ENCODE measurements at regions of chr1 and their contacts with region 1.

Region 1: GRCh38 chr1:224434691-224435317 is at the start of gene WDR26:
- DNase-seq: peak; percentile 81
- H3K4me3 ChIP-seq: peak within 1 kb of the TSS; percentile 24 to 100 (median 88)
- H3K27ac ChIP-seq: peak within 1 kb of the TSS; percentile 69
- H3K4me1 ChIP-seq: peaks cover 36% of the 10 kb centered on the region
- H3K27me3 ChIP-seq: no peaks in the 10 kb centered on the region
- CTCF ChIP-seq: peak in 1 of 2 donors; percentile 3
- POLR2A ChIP-seq: peak; percentile 88
- total RNA-seq, gene WDR26: 90.1 and 92.4 TPM in 2 replicates

Region 2: DNA sequence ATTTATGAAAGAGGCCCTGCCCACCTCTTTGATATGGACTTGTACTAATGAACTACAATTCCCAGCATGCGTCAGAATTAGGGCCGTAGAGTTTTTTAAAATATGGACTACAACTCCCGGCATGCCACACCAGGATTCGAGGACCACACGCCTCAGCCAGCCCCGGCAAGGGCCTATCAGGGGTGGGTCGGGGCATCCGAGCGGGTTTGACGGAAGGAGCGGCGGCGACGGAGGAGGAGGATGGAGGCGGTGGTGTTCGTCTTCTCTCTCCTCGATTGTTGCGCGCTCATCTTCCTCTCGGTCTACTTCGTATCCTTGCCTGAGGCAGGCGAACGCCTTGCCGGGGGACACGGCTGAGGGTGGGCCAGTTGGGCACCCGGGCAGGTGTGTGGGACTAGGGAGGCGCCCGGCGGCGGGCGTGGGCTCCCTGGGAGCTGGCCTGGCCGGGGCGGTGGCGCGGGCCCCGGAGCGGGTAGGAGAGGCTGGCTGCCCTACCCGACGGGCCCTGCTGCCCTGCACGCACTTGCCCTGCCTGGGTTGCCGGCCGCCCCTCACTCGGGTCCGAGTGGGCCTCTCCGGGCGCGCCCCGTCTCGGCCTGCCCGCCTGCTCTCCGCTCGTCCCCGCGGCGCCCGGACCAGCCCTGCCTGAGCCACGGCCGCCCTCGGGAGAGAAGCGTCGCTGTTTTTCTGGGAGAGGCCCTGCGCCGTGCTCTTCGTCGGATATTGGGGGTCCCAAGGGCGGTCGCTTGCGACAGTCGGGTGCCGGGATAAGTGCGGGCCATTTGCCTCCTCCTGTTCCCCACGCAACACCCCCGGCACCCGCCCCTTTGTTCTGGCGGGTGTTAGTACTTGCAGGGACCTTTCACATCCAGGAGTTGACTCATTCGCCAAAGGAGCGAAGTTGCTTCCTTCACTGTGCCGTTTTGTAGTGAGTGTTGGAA is 77.8 kb before region 1 on chr1 and contains the start of gene CNIH4:
- CTCF ChIA-PET with region 1: no interaction called
- POLR2A ChIA-PET with region 1: no interaction called
- dilution Hi-C with region 1: no loop called
- intact Hi-C with region 1: loop called (anchors 5 kb)
- DNase-seq: peak; percentile 95
- H3K4me3 ChIP-seq: peak within 1 kb of the TSS; percentile 67 to 71 (median 69)
- H3K27ac ChIP-seq: peak within 1 kb of the TSS; percentile 42
- H3K4me1 ChIP-seq: peaks cover 10% of the 10 kb centered on the region
- H3K27me3 ChIP-seq: no peaks in the 10 kb centered on the region
- CTCF ChIP-seq: no peak
- POLR2A ChIP-seq: peak; percentile 92
- total RNA-seq, gene CNIH4: 74.9 and 84.8 TPM in 2 replicates

Region 3: GRCh38 chr1:224377676-224378006 is 57.2 kb before region 1 on chr1:
- CTCF ChIA-PET with region 1: no interaction called
- POLR2A ChIA-PET with region 1: no interaction called
- dilution Hi-C with region 1: no loop called
- intact Hi-C with region 1: no loop called
- DNase-seq: no peak
- H3K4me3 ChIP-seq: no peak overlapping the region
- H3K27ac ChIP-seq: no peak overlapping the region
- H3K4me1 ChIP-seq: no peaks in the 10 kb centered on the region
- H3K27me3 ChIP-seq: no peaks in the 10 kb centered on the region
- CTCF ChIP-seq: no peak
- POLR2A ChIP-seq: no peak

Region 4: GRCh38 chr1:224497714-224498573 is 63.1 kb after region 1 on chr1:
- CTCF ChIA-PET with region 1: interaction called, 6 read pairs
- POLR2A ChIA-PET with region 1: interaction called, 4 read pairs
- dilution Hi-C with region 1: no loop called
- intact Hi-C with region 1: loop called (anchors 1 kb)
- DNase-seq: peak; percentile 89
- H3K4me3 ChIP-seq: peak overlapping the region in 1 of 3 experiments; percentile 20
- H3K27ac ChIP-seq: peak overlapping the region; percentile 94
- H3K4me1 ChIP-seq: peaks cover 30% of the 10 kb centered on the region
- H3K27me3 ChIP-seq: no peaks in the 10 kb centered on the region
- CTCF ChIP-seq: no peak
- POLR2A ChIP-seq: no peak

Region 5: DNA sequence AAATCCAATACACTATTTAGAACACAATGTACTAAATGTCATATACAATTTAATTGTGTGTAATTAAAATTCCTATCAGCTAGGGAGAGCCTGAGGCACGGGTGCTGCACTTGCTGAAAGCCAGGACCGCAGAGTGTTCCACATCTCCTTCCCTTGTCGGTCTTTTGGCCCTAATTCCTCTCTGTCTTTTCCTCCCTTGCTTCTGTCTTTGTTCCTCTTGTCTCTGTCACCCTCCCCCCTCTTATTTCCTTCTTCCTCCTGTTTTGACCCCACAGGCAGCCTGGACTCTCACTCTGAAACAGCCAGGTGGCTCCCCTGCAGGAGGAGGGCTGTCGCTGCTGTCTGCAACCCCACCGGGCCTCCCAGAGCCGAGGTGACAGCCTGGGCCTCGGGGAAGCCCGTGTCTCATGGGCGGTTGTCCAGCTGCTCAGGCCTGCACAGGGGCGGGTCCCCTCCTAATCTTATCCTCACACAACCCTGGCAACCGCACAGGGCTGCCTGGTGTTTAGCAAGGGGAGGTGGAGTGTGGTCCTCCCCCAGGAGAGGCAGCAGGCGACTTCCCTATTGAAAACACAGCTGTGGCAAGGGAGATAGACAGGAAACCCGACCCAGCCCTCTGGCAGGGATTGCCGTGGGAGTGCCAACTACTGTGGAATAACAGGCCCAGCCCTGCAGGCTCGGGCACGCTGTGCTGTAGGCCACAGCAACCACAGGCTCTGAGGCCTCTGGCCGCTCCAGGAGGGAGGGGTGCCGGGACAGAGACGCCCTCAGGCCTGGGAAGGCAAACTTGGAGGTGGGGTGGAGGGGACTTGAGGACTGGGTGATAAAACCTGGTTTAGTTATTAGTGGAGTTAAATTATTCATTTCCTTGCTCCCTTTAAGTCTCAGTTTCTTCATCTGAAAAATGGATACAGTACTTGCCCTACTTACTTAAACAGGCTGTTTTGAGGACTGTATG is 68.6 kb after region 1 on chr1:
- CTCF ChIA-PET with region 1: interaction called, 6 read pairs
- POLR2A ChIA-PET with region 1: interaction called, 4 read pairs
- dilution Hi-C with region 1: no loop called
- intact Hi-C with region 1: loop called (anchors 1 kb)
- DNase-seq: peak; percentile 93
- H3K4me3 ChIP-seq: no peak overlapping the region
- H3K27ac ChIP-seq: peak overlapping the region; percentile 23
- H3K4me1 ChIP-seq: peaks cover 28% of the 10 kb centered on the region
- H3K27me3 ChIP-seq: no peaks in the 10 kb centered on the region
- CTCF ChIP-seq: peak in 1 of 2 donors; percentile 27
- POLR2A ChIP-seq: no peak

Region 6: DNA sequence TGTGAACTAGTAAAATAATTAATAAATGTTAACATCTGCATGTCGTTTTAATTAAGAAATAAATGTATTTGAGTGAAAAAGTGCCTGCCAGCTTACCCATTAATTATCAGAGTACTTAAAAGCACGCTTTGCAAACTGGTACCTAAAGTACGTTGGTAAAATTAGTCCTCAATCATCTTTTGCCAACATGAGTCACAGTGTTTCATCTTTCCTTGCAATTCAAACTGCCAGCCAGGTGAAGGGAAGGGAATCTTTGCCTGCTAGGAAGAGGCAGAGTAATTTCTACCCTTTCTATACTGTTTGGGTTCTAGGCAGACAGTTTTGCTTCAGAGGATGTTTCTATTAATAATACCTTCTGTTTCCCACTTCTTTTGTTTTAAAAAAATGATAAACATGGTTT is 124.1 kb after region 1 on chr1:
- CTCF ChIA-PET with region 1: no interaction called
- POLR2A ChIA-PET with region 1: no interaction called
- dilution Hi-C with region 1: no loop called
- intact Hi-C with region 1: no loop called
- DNase-seq: no peak
- H3K4me3 ChIP-seq: no peak overlapping the region
- H3K27ac ChIP-seq: no peak overlapping the region
- H3K4me1 ChIP-seq: peaks cover 2% of the 10 kb centered on the region
- H3K27me3 ChIP-seq: no peaks in the 10 kb centered on the region
- CTCF ChIP-seq: no peak
- POLR2A ChIP-seq: no peak

Region 7: DNA sequence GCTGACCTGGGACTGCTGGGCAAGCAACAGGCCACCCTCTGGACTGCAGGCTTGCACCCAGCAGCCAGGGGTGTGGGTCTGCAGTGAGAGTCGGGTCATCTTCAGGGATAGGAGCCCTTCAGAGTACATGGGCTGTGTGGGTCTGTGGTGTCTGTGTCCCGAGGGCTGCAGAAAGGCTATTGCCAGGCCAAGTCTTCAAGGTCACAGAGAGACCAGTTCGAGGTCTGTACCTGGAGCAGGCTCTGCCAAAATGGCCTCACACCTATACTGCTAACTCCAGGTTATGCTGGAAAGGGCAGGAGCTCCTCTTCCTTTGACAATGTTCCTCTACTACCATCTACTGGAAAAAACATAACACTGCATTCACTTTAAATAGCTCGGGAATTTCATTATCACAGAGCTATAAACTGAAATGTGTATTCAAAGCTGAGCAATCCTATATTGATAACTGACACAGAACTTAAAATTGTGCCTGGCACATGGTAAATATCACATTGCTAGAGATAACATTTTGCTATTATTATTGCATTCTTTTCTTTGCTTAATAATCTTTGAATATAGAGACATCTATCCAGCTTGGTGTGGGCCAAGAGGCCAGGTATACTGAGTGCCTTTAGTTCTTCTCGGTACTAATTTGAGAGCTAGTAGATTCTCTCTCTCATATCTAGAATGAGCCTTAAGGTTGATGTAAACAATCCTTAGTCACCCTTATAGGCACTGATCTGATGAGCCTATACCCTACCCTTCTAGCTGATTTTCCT is 487.8 kb after region 1 on chr1:
- CTCF ChIA-PET with region 1: interaction called, 12 read pairs
- POLR2A ChIA-PET with region 1: no interaction called
- dilution Hi-C with region 1: no loop called
- intact Hi-C with region 1: no loop called
- DNase-seq: peak; percentile 24
- H3K4me3 ChIP-seq: no peak overlapping the region
- H3K27ac ChIP-seq: no peak overlapping the region
- H3K4me1 ChIP-seq: no peaks in the 10 kb centered on the region
- H3K27me3 ChIP-seq: peaks cover 0 to 4% of the 10 kb centered on the region in 2 experiments
- CTCF ChIP-seq: peak; percentile 44 to 45
- POLR2A ChIP-seq: no peak

Measured in endothelial cell of umbilical vein (primary cell).